Caco-2 (cell line): ENCODE measurements at regions of chr7 and their contacts with region 1.

Region 1: DNA sequence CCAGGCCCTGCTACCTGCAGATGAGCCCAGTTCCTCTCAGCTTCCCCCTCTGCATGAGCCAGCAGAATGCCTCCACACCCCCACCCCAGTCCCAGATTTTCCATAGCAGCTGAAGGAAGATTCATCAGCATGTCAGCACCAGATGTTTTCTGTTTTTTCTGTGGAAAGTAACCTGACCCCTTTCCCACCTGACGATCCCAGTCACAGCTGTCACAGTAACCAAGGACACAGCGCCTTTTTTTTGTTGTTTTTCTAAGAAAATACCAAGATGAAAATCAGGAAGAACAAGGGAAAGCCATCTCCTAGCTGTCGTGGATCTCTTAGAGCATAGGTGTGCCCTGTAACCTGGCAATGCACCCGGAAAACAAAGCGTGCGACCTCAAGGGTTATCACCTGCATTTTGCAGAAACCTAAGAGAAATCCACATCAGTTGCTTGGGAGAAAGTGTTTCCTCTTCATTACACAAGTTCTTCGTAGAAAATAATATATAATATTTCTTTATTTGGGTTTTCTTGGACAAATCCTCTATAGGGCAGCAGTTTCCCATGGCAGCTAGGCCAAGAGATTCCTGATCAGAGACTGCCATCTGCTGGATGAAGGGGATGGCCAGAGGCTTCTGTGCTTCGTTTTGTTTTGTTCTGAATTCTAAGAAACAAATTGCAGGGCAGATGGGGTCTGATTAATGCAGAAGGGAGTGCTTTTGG is 401.9 kb downstream of the TNS3 start:
- DNase-seq: peak in 1 of 2 experiments; percentile 63
- H3K4me3 ChIP-seq: no peak overlapping the region
- H3K4me3 Mint-ChIP-seq: no peak overlapping the region
- H3K27ac Mint-ChIP-seq: no peak overlapping the region
- H3K4me1 ChIP-seq: no peaks in the 10 kb centered on the region
- H3K4me1 Mint-ChIP-seq: no peaks in the 10 kb centered on the region
- H3K27me3 ChIP-seq: no peaks in the 10 kb centered on the region
- H3K27me3 Mint-ChIP-seq: no peaks in the 10 kb centered on the region
- CTCF ChIP-seq: peak; percentile 77 to 88

Region 2: GRCh38 chr7:45890902-45891461 is 1289.0 kb before region 1 on chr7:
- CTCF ChIA-PET with region 1: no interaction called
- POLR2A ChIA-PET with region 1: no interaction called
- intact Hi-C with region 1: loop called (anchors 2 kb)
- DNase-seq: peak in 1 of 2 experiments; percentile 43
- H3K4me3 ChIP-seq: no peak overlapping the region
- H3K4me3 Mint-ChIP-seq: no peak overlapping the region
- H3K27ac Mint-ChIP-seq: no peak overlapping the region
- H3K4me1 ChIP-seq: no peaks in the 10 kb centered on the region
- H3K4me1 Mint-ChIP-seq: no peaks in the 10 kb centered on the region
- H3K27me3 ChIP-seq: no peaks in the 10 kb centered on the region
- H3K27me3 Mint-ChIP-seq: peaks cover 30% of the 10 kb centered on the region
- CTCF ChIP-seq: peak; percentile 40 to 53

Region 3: GRCh38 chr7:45917658-45918057 is 1262.3 kb before region 1 on chr7:
- CTCF ChIA-PET with region 1: no interaction called
- POLR2A ChIA-PET with region 1: no interaction called
- intact Hi-C with region 1: loop called (anchors 1 kb)
- DNase-seq: peak; percentile 62 to 84
- H3K4me3 ChIP-seq: no peak overlapping the region
- H3K4me3 Mint-ChIP-seq: no peak overlapping the region
- H3K27ac Mint-ChIP-seq: no peak overlapping the region
- H3K4me1 ChIP-seq: peaks cover 5% of the 10 kb centered on the region; the same call in 1 of the 2 replicates
- H3K4me1 Mint-ChIP-seq: no peaks in the 10 kb centered on the region
- H3K27me3 ChIP-seq: no peaks in the 10 kb centered on the region; the same call in none of the 2 replicates
- H3K27me3 Mint-ChIP-seq: peaks cover 23% of the 10 kb centered on the region
- CTCF ChIP-seq: peak; percentile 96

Region 4: DNA sequence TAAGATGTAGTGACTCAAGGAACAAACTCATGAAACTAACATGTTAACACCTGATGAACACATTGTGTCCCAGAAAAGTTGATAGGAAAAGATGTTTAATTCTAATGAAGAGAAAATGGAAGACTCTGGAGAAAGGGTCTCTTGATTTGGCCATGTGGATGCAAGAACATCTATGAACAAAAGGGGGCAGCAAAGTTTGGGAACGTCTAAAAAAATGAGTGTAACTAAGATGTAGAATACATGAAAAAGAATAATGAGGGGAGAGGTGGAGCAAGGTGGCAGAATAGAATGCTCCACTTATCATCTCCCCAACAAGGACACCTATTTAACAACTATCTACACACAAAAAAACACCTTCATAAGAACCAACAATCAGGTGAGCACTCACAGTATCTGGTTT is 403.2 kb before region 1 on chr7:
- CTCF ChIA-PET with region 1: no interaction called
- POLR2A ChIA-PET with region 1: no interaction called
- intact Hi-C with region 1: loop called (anchors 1 kb)
- DNase-seq: no peak
- H3K4me3 ChIP-seq: no peak overlapping the region
- H3K4me3 Mint-ChIP-seq: no peak overlapping the region
- H3K27ac Mint-ChIP-seq: no peak overlapping the region
- H3K4me1 ChIP-seq: no peaks in the 10 kb centered on the region
- H3K4me1 Mint-ChIP-seq: no peaks in the 10 kb centered on the region
- H3K27me3 ChIP-seq: no peaks in the 10 kb centered on the region
- H3K27me3 Mint-ChIP-seq: peaks cover 7% of the 10 kb centered on the region
- CTCF ChIP-seq: peak; percentile 36 to 40

Region 5: GRCh38 chr7:46932676-46933424 is 247.1 kb before region 1 on chr7:
- CTCF ChIA-PET with region 1: no interaction called
- POLR2A ChIA-PET with region 1: no interaction called
- intact Hi-C with region 1: loop called (anchors 10 kb)
- DNase-seq: no peak
- H3K4me3 ChIP-seq: no peak overlapping the region
- H3K4me3 Mint-ChIP-seq: no peak overlapping the region
- H3K27ac Mint-ChIP-seq: no peak overlapping the region
- H3K4me1 ChIP-seq: no peaks in the 10 kb centered on the region
- H3K4me1 Mint-ChIP-seq: no peaks in the 10 kb centered on the region
- H3K27me3 ChIP-seq: no peaks in the 10 kb centered on the region
- H3K27me3 Mint-ChIP-seq: peaks cover 4% of the 10 kb centered on the region
- CTCF ChIP-seq: no peak

Region 6: DNA sequence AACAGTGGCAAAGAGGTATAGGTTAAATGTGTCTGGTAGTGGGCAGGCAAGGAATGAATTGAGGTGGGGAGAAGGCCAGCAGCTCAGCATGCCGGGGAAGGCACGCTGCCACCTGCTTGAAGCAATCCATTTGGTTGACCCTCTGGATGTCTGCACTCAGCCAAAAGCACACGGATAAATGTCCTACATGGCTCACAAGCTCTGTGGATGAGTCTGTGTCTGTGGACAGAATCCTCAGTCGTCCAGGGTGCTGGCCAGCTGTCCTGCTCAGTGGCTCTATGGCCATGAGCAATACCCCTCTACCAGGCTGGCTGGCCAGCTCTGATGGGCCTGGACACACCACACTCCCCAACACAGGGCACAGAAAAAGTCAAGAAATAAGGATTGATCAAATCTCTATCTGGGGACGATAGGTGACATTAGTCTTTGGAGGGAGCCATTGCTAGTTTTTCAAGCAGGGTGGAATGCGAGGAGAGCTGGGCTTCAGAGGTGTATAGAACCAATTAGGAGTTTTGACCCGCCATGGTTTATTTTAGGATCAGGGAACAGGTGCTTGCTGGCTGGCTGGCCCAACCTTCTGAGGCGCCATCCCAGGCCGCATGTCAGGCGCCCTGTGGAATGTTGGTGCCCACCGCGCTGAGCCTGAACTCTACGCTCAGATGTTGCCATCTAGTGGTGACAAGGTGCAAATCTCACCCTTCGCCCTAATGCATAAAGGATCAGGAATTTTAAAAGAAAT is 91.5 kb before region 1 on chr7:
- CTCF ChIA-PET with region 1: no interaction called
- POLR2A ChIA-PET with region 1: no interaction called
- intact Hi-C with region 1: loop called (anchors 1 kb)
- DNase-seq: peak; percentile 46 to 61
- H3K4me3 ChIP-seq: no peak overlapping the region
- H3K4me3 Mint-ChIP-seq: no peak overlapping the region
- H3K27ac Mint-ChIP-seq: no peak overlapping the region
- H3K4me1 ChIP-seq: no peaks in the 10 kb centered on the region
- H3K4me1 Mint-ChIP-seq: no peaks in the 10 kb centered on the region
- H3K27me3 ChIP-seq: no peaks in the 10 kb centered on the region
- H3K27me3 Mint-ChIP-seq: no peaks in the 10 kb centered on the region
- CTCF ChIP-seq: peak; percentile 81 to 82

Region 7: DNA sequence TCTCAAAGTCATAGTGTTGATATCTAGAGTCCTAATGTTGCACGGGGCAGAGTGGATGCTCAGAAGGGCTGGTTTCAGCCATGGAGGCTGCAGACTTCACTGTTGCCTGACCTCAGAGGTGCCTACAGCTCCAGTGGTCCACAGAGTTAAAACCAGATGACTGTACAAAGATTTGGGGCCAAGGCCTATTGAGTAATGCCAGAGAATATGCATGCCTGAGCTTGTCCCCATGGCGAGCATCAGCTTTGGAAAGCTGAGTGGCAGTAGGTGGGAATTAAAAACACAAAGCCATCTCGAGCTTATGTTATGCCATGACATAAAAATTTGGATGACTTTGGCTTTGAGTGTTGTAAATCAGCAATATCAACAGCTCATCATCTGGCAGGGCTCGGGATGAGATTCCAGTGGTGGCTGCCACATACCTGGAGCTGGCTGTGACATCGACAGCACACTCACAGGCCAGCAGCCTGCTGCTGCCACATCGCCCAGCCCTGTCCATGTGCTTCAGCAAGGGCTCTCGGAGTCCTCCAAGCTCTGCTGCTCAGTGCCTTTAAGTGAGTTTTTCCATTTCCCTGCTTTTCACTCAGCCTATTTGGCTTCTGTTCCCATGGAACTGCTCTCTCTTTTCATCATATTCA is 22.3 kb after region 1 on chr7:
- CTCF ChIA-PET with region 1: no interaction called
- POLR2A ChIA-PET with region 1: no interaction called
- intact Hi-C with region 1: no loop called
- DNase-seq: no peak
- H3K4me3 ChIP-seq: no peak overlapping the region
- H3K4me3 Mint-ChIP-seq: no peak overlapping the region
- H3K27ac Mint-ChIP-seq: no peak overlapping the region
- H3K4me1 ChIP-seq: no peaks in the 10 kb centered on the region; the same call in 1 of the 2 replicates
- H3K4me1 Mint-ChIP-seq: peaks cover 10% of the 10 kb centered on the region
- H3K27me3 ChIP-seq: no peaks in the 10 kb centered on the region
- H3K27me3 Mint-ChIP-seq: peaks cover 9% of the 10 kb centered on the region
- CTCF ChIP-seq: no peak

Region 8: GRCh38 chr7:47218378-47219176 is 38.6 kb after region 1 on chr7:
- CTCF ChIA-PET with region 1: no interaction called
- POLR2A ChIA-PET with region 1: no interaction called
- intact Hi-C with region 1: no loop called
- DNase-seq: no peak
- H3K4me3 ChIP-seq: no peak overlapping the region
- H3K4me3 Mint-ChIP-seq: no peak overlapping the region
- H3K27ac Mint-ChIP-seq: peak overlapping the region; percentile 65
- H3K4me1 ChIP-seq: peaks cover 6% of the 10 kb centered on the region; the same call in 1 of the 2 replicates
- H3K4me1 Mint-ChIP-seq: no peaks in the 10 kb centered on the region
- H3K27me3 ChIP-seq: no peaks in the 10 kb centered on the region
- H3K27me3 Mint-ChIP-seq: peaks cover 6% of the 10 kb centered on the region
- CTCF ChIP-seq: no peak

Region 9: GRCh38 chr7:47254081-47255006 is 74.4 kb after region 1 on chr7:
- CTCF ChIA-PET with region 1: no interaction called
- POLR2A ChIA-PET with region 1: no interaction called
- intact Hi-C with region 1: loop called (anchors 5 kb)
- DNase-seq: peak; percentile 74 to 86
- H3K4me3 ChIP-seq: peak overlapping the region; percentile 52
- H3K4me3 Mint-ChIP-seq: peak overlapping the region; percentile 68
- H3K27ac Mint-ChIP-seq: no peak overlapping the region
- H3K4me1 ChIP-seq: no peaks in the 10 kb centered on the region; the same call in 1 of the 2 replicates
- H3K4me1 Mint-ChIP-seq: no peaks in the 10 kb centered on the region
- H3K27me3 ChIP-seq: no peaks in the 10 kb centered on the region
- H3K27me3 Mint-ChIP-seq: peaks cover 7% of the 10 kb centered on the region
- CTCF ChIP-seq: peak; percentile 53 to 94